ENCODE measurements at regions of chr5 and their contacts with region 1.

Region 1: GRCh38 chr5:78221964-78222451 is 72.5 kb downstream of the AP3B1 start:
- H3K4me3 Mint-ChIP-seq: peak overlapping the region; percentile 66
- H3K27ac Mint-ChIP-seq: peak overlapping the region; percentile 83
- H3K4me1 Mint-ChIP-seq: peaks cover 28% of the 10 kb centered on the region
- H3K27me3 Mint-ChIP-seq: no peaks in the 10 kb centered on the region

Region 2: GRCh38 chr5:78243639-78244038 is 21.6 kb after region 1 on chr5:
- intact Hi-C with region 1: no loop called
- H3K4me3 Mint-ChIP-seq: no peak overlapping the region
- H3K27ac Mint-ChIP-seq: no peak overlapping the region
- H3K4me1 Mint-ChIP-seq: peaks cover 10% of the 10 kb centered on the region
- H3K27me3 Mint-ChIP-seq: no peaks in the 10 kb centered on the region

Region 3: DNA sequence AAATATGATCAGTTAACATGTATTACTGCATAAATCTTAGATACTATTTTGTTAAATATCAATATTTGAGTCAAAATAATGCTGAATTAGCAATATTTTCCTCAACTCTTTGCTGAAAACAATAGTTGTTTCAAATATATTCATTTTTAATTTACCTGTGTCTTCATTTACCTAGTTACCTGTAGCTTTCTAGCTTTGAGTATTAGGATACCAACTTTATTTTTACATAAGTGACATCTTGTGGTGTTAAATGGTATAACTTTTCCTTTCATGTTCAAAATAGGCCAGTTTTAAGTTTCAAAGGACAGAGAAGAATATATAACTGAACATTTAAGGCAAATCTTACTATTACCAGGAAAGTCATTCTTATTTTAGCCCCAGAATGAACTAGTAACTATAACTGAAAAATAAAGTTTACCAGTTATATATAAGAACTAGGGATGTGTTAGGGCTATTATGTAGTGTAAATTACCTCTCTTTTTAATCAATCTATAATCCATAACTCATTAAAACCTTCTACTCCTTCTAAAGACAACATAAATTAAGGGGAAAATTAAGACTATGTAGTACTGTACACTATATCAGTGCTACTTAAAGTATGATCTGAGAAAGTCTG is 47.2 kb after region 1 on chr5:
- intact Hi-C with region 1: loop called (anchors 5 kb)
- H3K4me3 Mint-ChIP-seq: no peak overlapping the region
- H3K27ac Mint-ChIP-seq: no peak overlapping the region
- H3K4me1 Mint-ChIP-seq: peaks cover 20% of the 10 kb centered on the region
- H3K27me3 Mint-ChIP-seq: no peaks in the 10 kb centered on the region